ENCODE measurements at regions of chr3 and their contacts with region 1.

Region 1: DNA sequence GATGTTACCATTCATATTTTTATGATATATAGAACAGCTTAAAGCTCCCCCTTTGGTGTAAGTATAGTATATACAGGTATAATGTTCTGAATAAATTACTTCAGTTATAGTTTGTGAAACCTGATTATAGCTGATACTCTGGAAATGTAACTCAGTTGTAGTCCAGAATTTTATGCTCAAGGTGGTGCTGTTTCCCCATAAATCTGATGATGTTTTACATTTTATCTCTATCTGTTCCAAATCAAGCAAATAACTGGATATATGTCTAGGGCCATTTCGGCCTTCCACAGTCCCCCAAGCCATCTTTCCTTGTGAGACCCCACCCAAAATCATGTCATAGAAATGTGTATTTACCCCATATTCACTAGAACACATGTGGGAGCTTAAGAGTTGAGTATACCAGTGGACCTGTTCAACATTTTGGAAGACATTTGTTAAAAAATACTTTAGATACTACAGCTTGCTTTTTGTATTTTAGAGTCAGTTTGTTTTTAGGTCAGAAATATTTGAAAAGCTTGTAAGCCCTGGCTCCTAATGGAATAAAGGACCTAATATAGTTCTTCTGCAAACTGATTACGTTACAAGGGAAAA is 107.1 kb downstream of the ATG7 start:
- DNase-seq: peak; percentile 90
- H3K4me3 ChIP-seq: peak overlapping the region in 2 of 3 experiments; percentile 24 to 43
- H3K27ac ChIP-seq: peak overlapping the region; percentile 98
- H3K4me1 ChIP-seq: peaks cover 21% of the 10 kb centered on the region
- H3K27me3 ChIP-seq: no peaks in the 10 kb centered on the region
- CTCF ChIP-seq: peak; percentile 28 to 43
- POLR2A ChIP-seq: no peak

Region 2: DNA sequence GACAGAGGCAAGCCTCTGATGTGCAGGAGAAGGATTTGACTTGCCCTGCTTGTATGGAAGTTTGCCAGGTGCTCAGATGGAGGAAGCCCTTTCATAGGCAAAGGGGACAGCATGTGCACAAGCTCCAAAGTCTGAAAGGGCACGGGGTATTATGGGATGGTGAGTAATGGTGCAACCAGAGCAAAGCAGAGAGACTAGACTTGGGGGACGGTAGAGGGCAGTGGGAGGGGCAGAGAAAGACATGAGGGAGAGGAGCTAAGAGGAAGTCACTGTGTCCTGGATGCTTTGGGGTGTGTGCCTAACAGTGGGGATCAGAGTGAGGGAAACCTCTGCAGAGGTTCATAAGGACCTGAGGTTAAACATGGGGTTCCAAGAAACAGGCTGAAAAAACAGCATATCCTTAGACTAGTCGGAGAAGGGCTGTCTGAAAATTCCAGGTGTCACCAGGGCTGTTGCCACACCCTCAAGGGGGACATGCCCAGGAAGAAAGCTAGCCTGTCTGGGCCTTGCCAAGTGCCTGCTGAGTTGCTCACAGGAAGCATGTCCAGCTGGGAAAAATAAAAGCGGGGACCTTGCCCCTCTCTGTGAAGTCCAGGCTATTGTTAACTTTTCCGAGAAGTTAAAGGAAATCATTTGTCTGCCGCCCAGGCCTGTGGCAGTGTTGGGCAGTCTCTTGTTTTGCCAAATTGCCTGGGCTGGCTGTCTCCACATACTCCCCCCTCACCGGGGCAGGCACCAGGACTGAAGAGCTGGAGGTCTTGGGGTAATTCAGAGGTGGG is 177.9 kb before region 1 on chr3:
- CTCF ChIA-PET with region 1: no interaction called
- POLR2A ChIA-PET with region 1: no interaction called
- dilution Hi-C with region 1: no loop called
- intact Hi-C with region 1: no loop called
- DNase-seq: peak; percentile 97
- H3K4me3 ChIP-seq: no peak overlapping the region
- H3K27ac ChIP-seq: peak overlapping the region; percentile 99
- H3K4me1 ChIP-seq: peaks cover 75% of the 10 kb centered on the region
- H3K27me3 ChIP-seq: no peaks in the 10 kb centered on the region
- CTCF ChIP-seq: peak in 1 of 2 donors; percentile 7
- POLR2A ChIP-seq: peak; percentile 75

Region 3: GRCh38 chr3:11300970-11301369 is 78.4 kb before region 1 on chr3:
- CTCF ChIA-PET with region 1: no interaction called
- POLR2A ChIA-PET with region 1: no interaction called
- dilution Hi-C with region 1: no loop called
- intact Hi-C with region 1: no loop called
- DNase-seq: no peak
- H3K4me3 ChIP-seq: no peak overlapping the region
- H3K27ac ChIP-seq: no peak overlapping the region
- H3K4me1 ChIP-seq: peaks cover 11% of the 10 kb centered on the region
- H3K27me3 ChIP-seq: no peaks in the 10 kb centered on the region
- CTCF ChIP-seq: no peak
- POLR2A ChIP-seq: no peak

Region 4: GRCh38 chr3:11477407-11477911 is 98.1 kb after region 1 on chr3:
- CTCF ChIA-PET with region 1: interaction called, 14 read pairs
- POLR2A ChIA-PET with region 1: no interaction called
- dilution Hi-C with region 1: no loop called
- intact Hi-C with region 1: loop called (anchors 1 kb)
- DNase-seq: peak; percentile 95
- H3K4me3 ChIP-seq: peak overlapping the region; percentile 10 to 82 (median 39)
- H3K27ac ChIP-seq: peak overlapping the region; percentile 100
- H3K4me1 ChIP-seq: peaks cover 47% of the 10 kb centered on the region
- H3K27me3 ChIP-seq: no peaks in the 10 kb centered on the region
- CTCF ChIP-seq: no peak
- POLR2A ChIP-seq: peak; percentile 81

Region 5: DNA sequence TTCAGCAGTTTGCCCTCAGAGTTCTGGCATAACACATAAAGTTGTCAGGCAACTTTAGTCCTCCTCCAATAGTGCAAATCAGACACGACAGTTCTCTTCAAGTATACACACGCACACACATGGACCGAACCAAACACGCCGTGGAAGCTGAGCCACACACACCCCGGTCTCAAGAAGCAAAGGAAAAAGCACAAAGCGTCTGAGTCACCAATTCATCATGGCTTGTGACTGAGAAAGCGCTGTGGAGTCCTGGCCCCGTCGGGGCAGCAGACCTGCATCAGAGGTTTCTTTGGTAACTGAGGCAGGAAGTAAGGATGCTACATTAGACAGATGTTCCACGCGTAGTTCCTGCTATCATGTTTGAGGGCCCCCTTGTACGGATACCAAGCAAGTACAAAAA is 178.7 kb after region 1 on chr3:
- CTCF ChIA-PET with region 1: interaction called, 20 read pairs
- POLR2A ChIA-PET with region 1: no interaction called
- dilution Hi-C with region 1: no loop called
- intact Hi-C with region 1: loop called (anchors 2 kb)
- DNase-seq: peak; percentile 76
- H3K4me3 ChIP-seq: no peak overlapping the region
- H3K27ac ChIP-seq: peak overlapping the region; percentile 78
- H3K4me1 ChIP-seq: peaks cover 51% of the 10 kb centered on the region
- H3K27me3 ChIP-seq: no peaks in the 10 kb centered on the region
- CTCF ChIP-seq: no peak
- POLR2A ChIP-seq: no peak

Region 6: GRCh38 chr3:11643605-11644087 is 264.3 kb after region 1 on chr3 and contains the start of gene VGLL4:
- CTCF ChIA-PET with region 1: interaction called, 189 read pairs
- POLR2A ChIA-PET with region 1: interaction called, 3 read pairs
- dilution Hi-C with region 1: no loop called
- intact Hi-C with region 1: loop called (anchors 2 kb)
- DNase-seq: peak; percentile 95
- H3K4me3 ChIP-seq: peak within 1 kb of the TSS; percentile 70 to 99 (median 79)
- H3K27ac ChIP-seq: peak within 1 kb of the TSS; percentile 92
- H3K4me1 ChIP-seq: peaks cover 30% of the 10 kb centered on the region
- H3K27me3 ChIP-seq: no peaks in the 10 kb centered on the region
- CTCF ChIP-seq: peak in 1 of 2 donors; percentile 4
- POLR2A ChIP-seq: peak; percentile 95
- total RNA-seq, gene VGLL4: 58.9 and 67.0 TPM in 2 replicates

Region 7: GRCh38 chr3:11764931-11765363 is 385.6 kb after region 1 on chr3:
- CTCF ChIA-PET with region 1: interaction called, 6 read pairs
- POLR2A ChIA-PET with region 1: interaction called, 8 read pairs
- dilution Hi-C with region 1: no loop called
- intact Hi-C with region 1: loop called (anchors 1 kb)
- DNase-seq: peak; percentile 94
- H3K4me3 ChIP-seq: no peak overlapping the region
- H3K27ac ChIP-seq: peak overlapping the region; percentile 89
- H3K4me1 ChIP-seq: peaks cover 9% of the 10 kb centered on the region
- H3K27me3 ChIP-seq: no peaks in the 10 kb centered on the region
- CTCF ChIP-seq: no peak
- POLR2A ChIP-seq: peak; percentile 47

Region 8: DNA sequence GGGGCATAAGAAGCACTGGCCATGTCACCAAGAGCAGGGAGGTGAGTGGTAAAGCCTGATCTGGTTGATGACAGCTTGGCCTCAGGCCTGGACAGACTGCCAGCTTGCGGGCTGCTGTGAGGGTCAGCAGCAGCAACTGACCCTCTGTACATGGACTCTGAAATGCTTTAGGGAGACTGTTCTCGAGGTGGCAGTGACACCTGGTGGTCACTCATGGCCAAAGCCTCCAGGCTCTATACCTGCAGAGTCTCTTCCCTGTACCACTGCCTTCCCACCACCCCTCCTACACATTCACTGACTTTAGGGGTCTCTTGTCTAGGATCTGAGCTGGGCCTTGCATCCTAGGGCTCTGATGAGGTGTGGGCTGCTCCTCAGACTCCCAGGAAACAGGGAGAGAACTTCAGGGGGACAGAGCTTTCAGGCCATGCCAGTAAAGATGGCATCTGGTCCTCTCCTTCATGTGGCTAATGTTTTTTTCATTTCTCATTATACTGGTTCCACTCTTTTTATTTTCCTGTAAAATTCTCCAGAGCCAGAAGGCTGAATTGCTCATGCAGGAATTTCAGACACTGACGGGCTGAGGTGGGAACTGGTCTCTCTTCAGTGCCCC is 796.6 kb after region 1 on chr3:
- CTCF ChIA-PET with region 1: interaction called, 4 read pairs
- POLR2A ChIA-PET with region 1: no interaction called
- dilution Hi-C with region 1: no loop called
- intact Hi-C with region 1: loop called (anchors 2 kb)
- DNase-seq: peak; percentile 52
- H3K4me3 ChIP-seq: no peak overlapping the region
- H3K27ac ChIP-seq: no peak overlapping the region
- H3K4me1 ChIP-seq: peaks cover 32% of the 10 kb centered on the region
- H3K27me3 ChIP-seq: no peaks in the 10 kb centered on the region
- CTCF ChIP-seq: peak; percentile 68 to 90
- POLR2A ChIP-seq: no peak